ENCODE measurements at regions of chr5 and their contacts with region 1.

Region 1: GRCh38 chr5:126780165-126780827 is 3.4 kb downstream of the LMNB1 start:
- DNase-seq: no peak
- H3K4me3 ChIP-seq: no peak overlapping the region
- H3K27ac ChIP-seq: no peak overlapping the region
- H3K4me1 ChIP-seq: peaks cover 37% of the 10 kb centered on the region
- H3K27me3 ChIP-seq: no peaks in the 10 kb centered on the region
- CTCF ChIP-seq: peak; percentile 70

Region 2: DNA sequence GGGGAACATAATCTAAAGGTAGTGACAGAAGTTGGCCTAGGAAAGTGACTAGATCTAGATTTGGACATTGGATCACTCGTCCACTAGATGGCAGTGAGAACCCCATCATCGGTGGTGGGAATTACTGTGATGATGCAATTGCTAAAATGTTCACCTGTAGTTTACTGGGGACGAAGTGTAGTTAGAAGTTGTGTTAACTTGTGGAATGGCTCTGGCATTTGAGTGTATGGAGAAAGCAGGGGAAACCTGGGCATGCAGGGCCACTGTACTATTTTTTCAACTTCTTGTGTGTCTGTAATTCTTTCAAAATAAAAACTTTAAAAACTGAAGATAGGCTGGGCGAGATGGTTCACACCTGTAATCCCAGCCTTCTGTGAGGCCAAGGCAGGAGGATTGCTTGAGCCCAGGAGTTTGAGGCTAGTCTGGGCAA is 104.1 kb before region 1 on chr5:
- intact Hi-C with region 1: loop called (anchors 5 kb)
- DNase-seq: no peak
- H3K4me3 ChIP-seq: no peak overlapping the region
- H3K27ac ChIP-seq: no peak overlapping the region
- H3K4me1 ChIP-seq: no peaks in the 10 kb centered on the region
- H3K27me3 ChIP-seq: peaks cover 17% of the 10 kb centered on the region
- CTCF ChIP-seq: peak; percentile 85

Measured in left ventricle myocardium inferior (tissue), 1 donor.